GM12878 (cell line): ENCODE measurements at regions of chr1 and their contacts with region 1.

Region 1: GRCh38 chr1:16009030-16009709 is 5.1 kb downstream of the SRARP start:
- DNase-seq: no peak
- ATAC-seq: peak; percentile 55
- H3K4me3 ChIP-seq: no peak overlapping the region
- H3K27ac ChIP-seq: no peak overlapping the region
- H3K4me1 ChIP-seq: peaks cover 35% of the 10 kb centered on the region
- H3K27me3 ChIP-seq: no peaks in the 10 kb centered on the region; a peak in 1 of 4 replicates
- CTCF ChIP-seq: peak; percentile 93 to 97 (median 93)
- EP300 ChIP-seq: no peak
- POLR2A ChIP-seq: no peak
- RAD21 ChIP-seq: peak; percentile 94

Region 2: DNA sequence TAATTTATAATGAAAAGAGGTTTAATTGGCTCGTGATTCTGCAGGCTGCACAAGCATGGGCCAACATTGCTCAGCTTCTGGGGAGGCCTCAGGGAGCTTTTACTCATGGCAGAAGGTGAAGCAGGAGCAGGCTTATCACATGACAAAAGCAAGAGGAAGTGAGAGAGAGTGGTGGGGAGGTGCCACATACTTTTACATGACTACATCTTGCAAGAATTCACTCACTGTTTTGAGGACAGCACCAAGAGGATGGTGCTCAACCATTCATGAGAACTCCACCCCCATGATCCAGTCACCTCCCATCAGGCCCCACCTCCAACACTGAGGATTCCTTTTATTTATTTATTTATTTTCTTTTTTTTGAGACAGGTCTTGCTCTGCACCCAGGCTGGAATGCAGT is 330.6 kb before region 1 on chr1:
- CTCF ChIA-PET with region 1: no interaction called
- POLR2A ChIA-PET with region 1: no interaction called
- RAD21 ChIA-PET with region 1: no interaction called
- SMC1A ChIA-PET with region 1: no interaction called
- in situ Hi-C with region 1: no loop called
- intact Hi-C with region 1: no loop called
- DNase-seq: peak; percentile 53
- ATAC-seq: peak; percentile 86
- H3K4me3 ChIP-seq: no peak overlapping the region
- H3K27ac ChIP-seq: no peak overlapping the region
- H3K4me1 ChIP-seq: peaks cover 6% of the 10 kb centered on the region
- H3K27me3 ChIP-seq: no peaks in the 10 kb centered on the region
- CTCF ChIP-seq: no peak
- EP300 ChIP-seq: no peak
- POLR2A ChIP-seq: no peak
- RAD21 ChIP-seq: no peak

Region 3: DNA sequence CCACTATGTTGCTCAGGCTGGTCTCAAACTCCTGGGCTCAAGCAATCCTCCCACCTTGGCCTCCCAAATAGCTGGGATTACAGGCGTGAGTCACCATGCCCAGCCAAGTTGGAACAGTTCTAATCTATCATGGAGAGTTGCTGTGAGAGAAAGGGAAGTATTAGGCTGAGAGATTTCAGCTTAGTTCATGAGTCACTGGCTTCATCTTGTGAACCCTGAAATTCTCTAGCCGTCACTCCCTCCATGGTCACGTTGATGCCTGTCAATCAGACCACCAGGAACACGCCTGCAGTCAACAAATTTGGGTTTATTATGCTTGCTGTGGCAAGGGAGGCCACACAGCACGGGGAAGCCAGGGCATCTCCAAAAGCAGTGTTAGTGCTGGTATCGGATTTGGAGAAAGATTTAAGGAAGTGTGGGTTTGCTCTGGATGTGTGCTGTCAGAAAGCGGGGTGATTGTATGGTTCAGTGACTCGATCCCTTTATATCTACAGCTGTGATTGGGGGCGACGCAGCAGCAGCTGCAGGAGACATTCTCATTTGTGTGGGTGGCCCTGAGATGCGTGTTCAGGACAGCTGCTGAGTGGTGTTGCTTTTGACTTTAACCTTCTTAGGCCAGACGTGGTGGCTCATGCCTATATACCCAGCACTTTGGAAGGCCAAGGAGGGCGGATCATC is 220.4 kb before region 1 on chr1:
- CTCF ChIA-PET with region 1: interaction called, 37 read pairs
- POLR2A ChIA-PET with region 1: no interaction called
- RAD21 ChIA-PET with region 1: interaction called, 10 read pairs
- SMC1A ChIA-PET with region 1: interaction called, 8 read pairs
- in situ Hi-C with region 1: no loop called
- intact Hi-C with region 1: no loop called
- DNase-seq: no peak
- ATAC-seq: peak; percentile 34; the same call in 2 of the 3 replicates
- H3K4me3 ChIP-seq: no peak overlapping the region
- H3K27ac ChIP-seq: no peak overlapping the region
- H3K4me1 ChIP-seq: peaks cover 5% of the 10 kb centered on the region
- H3K27me3 ChIP-seq: no peaks in the 10 kb centered on the region; a peak in 1 of 4 replicates
- CTCF ChIP-seq: no peak
- EP300 ChIP-seq: no peak
- POLR2A ChIP-seq: no peak
- RAD21 ChIP-seq: no peak

Region 4: GRCh38 chr1:15803354-15803753 is 205.8 kb before region 1 on chr1:
- CTCF ChIA-PET with region 1: interaction called, 16 read pairs
- POLR2A ChIA-PET with region 1: no interaction called
- RAD21 ChIA-PET with region 1: interaction called, 7 read pairs
- SMC1A ChIA-PET with region 1: interaction called, 4 read pairs
- in situ Hi-C with region 1: no loop called
- intact Hi-C with region 1: loop called (anchors 5 kb)
- DNase-seq: no peak
- ATAC-seq: peak; percentile 76
- H3K4me3 ChIP-seq: no peak overlapping the region
- H3K27ac ChIP-seq: no peak overlapping the region
- H3K4me1 ChIP-seq: no peaks in the 10 kb centered on the region
- H3K27me3 ChIP-seq: no peaks in the 10 kb centered on the region
- CTCF ChIP-seq: peak; percentile 39 to 53 (median 47)
- EP300 ChIP-seq: no peak
- POLR2A ChIP-seq: no peak
- RAD21 ChIP-seq: peak; percentile 63

Region 5: GRCh38 chr1:15975805-15976680 is 33.1 kb before region 1 on chr1 and contains the start of gene ZBTB17:
- CTCF ChIA-PET with region 1: interaction called, 8 read pairs
- POLR2A ChIA-PET with region 1: interaction called, 4 read pairs
- RAD21 ChIA-PET with region 1: interaction called, 11 read pairs
- SMC1A ChIA-PET with region 1: interaction called, 6 read pairs
- in situ Hi-C with region 1: no loop called
- intact Hi-C with region 1: no loop called
- DNase-seq: peak; percentile 79
- ATAC-seq: peak; percentile 82
- H3K4me3 ChIP-seq: peak within 1 kb of the TSS; percentile 95
- H3K27ac ChIP-seq: peak within 1 kb of the TSS; percentile 80
- H3K4me1 ChIP-seq: peaks cover 4% of the 10 kb centered on the region
- H3K27me3 ChIP-seq: no peaks in the 10 kb centered on the region
- CTCF ChIP-seq: no peak
- EP300 ChIP-seq: no peak
- POLR2A ChIP-seq: peak; percentile 78
- RAD21 ChIP-seq: no peak
- polyA plus RNA-seq, gene ZBTB17: 0.87 to 4.3 TPM

Region 6: DNA sequence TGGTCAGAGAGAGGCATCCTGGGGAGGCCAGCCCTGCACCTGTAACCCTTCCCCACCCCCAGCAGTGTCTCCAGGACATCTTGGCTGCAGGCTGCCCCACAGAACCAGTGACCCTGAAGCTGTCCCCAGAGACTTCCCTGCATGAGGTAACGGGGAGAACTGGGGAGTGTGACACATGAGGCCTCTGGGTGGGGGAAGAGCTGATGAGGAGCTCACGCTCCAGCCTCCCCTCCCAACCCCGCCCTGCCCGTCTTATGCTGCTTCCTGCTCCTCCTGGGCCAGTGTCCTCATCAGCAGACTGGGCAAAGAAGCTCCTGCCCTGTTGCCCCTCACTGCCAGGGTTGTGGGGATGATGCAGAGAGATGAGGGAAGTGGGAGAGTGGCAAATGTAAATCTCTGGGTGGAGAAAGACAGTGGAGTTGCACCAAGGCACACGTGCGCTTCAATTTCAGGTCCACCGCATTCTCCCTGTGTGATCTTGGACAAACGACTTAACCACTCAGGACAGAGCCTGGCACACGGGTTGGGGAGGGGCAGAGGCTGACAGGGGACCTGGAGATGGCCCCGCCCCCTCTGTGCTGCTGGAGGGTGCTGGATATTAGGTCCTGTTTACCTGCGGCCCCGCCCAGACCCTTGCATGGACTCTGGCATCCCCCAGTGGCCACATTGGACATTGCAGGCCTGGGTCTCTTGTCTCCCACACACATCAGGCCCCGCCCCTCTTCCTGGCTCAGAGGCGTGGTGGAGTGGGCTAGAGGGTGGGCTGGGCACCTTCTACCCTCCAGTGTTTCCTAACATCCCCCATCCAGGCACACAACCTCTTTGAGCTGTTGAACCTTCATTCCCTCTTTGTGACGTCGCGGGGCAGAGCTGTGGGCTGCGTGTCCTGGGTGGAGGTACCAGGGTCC is 46.7 kb after region 1 on chr1:
- CTCF ChIA-PET with region 1: interaction called, 81 read pairs
- POLR2A ChIA-PET with region 1: no interaction called
- RAD21 ChIA-PET with region 1: interaction called, 8 read pairs
- SMC1A ChIA-PET with region 1: interaction called, 17 read pairs
- in situ Hi-C with region 1: no loop called
- intact Hi-C with region 1: loop called (anchors 1 kb)
- DNase-seq: peak; percentile 33
- ATAC-seq: peak; percentile 97
- H3K4me3 ChIP-seq: no peak overlapping the region
- H3K27ac ChIP-seq: no peak overlapping the region
- H3K4me1 ChIP-seq: no peaks in the 10 kb centered on the region
- H3K27me3 ChIP-seq: no peaks in the 10 kb centered on the region
- CTCF ChIP-seq: peak; percentile 97 to 100 (median 98)
- EP300 ChIP-seq: no peak
- POLR2A ChIP-seq: no peak
- RAD21 ChIP-seq: peak; percentile 96

Region 7: GRCh38 chr1:16173020-16173980 is 164.1 kb after region 1 on chr1:
- CTCF ChIA-PET with region 1: no interaction called
- POLR2A ChIA-PET with region 1: no interaction called
- RAD21 ChIA-PET with region 1: no interaction called
- SMC1A ChIA-PET with region 1: no interaction called
- in situ Hi-C with region 1: no loop called
- intact Hi-C with region 1: no loop called
- DNase-seq: no peak
- ATAC-seq: no peak
- H3K4me3 ChIP-seq: no peak overlapping the region
- H3K27ac ChIP-seq: no peak overlapping the region
- H3K4me1 ChIP-seq: no peaks in the 10 kb centered on the region
- H3K27me3 ChIP-seq: no peaks in the 10 kb centered on the region; a peak in 1 of 4 replicates
- CTCF ChIP-seq: no peak
- EP300 ChIP-seq: no peak
- POLR2A ChIP-seq: no peak
- RAD21 ChIP-seq: no peak

Region 8: GRCh38 chr1:16187748-16188401 is 178.7 kb after region 1 on chr1:
- CTCF ChIA-PET with region 1: interaction called, 6 read pairs
- POLR2A ChIA-PET with region 1: no interaction called
- RAD21 ChIA-PET with region 1: interaction called, 5 read pairs
- SMC1A ChIA-PET with region 1: interaction called, 3 read pairs
- in situ Hi-C with region 1: no loop called
- intact Hi-C with region 1: loop called (anchors 1 kb)
- DNase-seq: no peak
- ATAC-seq: peak; percentile 93
- H3K4me3 ChIP-seq: no peak overlapping the region
- H3K27ac ChIP-seq: no peak overlapping the region
- H3K4me1 ChIP-seq: no peaks in the 10 kb centered on the region
- H3K27me3 ChIP-seq: no peaks in the 10 kb centered on the region
- CTCF ChIP-seq: peak; percentile 91 to 96 (median 94)
- EP300 ChIP-seq: no peak
- POLR2A ChIP-seq: no peak
- RAD21 ChIP-seq: peak; percentile 98